Aorta (tissue), 5 donors: ENCODE measurements at regions of chr16 and their contacts with region 1.

Region 1: DNA sequence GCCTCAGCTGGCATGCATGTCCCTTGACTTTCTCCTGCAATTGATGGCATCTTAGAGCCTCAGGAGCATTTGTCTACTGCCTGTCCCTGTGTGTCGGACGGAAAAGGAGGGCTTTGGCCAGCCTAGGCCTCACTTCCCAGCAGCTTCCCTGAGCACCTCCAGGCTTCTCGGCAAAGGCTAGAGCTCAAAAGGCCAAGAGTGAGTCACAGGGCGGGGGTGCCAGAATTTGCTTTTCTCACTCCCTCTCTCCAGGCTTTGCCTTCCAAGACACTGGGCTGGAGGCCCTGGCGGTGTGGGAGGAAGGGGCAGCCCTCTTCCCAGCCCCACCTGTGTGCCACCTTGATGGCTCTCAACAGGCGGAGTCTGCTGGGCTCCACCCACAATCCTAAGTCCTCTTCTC is 107.3 kb upstream of the MAF start:
- DNase-seq: peak; percentile 92 to 94
- ATAC-seq: peak; percentile 91
- H3K4me3 ChIP-seq: no peak overlapping the region
- H3K27ac ChIP-seq: peak overlapping the region; percentile 88
- H3K4me1 ChIP-seq: peaks cover 4 to 13% of the 10 kb centered on the region in 2 donors
- H3K27me3 ChIP-seq: no peaks in the 10 kb centered on the region

Region 2: DNA sequence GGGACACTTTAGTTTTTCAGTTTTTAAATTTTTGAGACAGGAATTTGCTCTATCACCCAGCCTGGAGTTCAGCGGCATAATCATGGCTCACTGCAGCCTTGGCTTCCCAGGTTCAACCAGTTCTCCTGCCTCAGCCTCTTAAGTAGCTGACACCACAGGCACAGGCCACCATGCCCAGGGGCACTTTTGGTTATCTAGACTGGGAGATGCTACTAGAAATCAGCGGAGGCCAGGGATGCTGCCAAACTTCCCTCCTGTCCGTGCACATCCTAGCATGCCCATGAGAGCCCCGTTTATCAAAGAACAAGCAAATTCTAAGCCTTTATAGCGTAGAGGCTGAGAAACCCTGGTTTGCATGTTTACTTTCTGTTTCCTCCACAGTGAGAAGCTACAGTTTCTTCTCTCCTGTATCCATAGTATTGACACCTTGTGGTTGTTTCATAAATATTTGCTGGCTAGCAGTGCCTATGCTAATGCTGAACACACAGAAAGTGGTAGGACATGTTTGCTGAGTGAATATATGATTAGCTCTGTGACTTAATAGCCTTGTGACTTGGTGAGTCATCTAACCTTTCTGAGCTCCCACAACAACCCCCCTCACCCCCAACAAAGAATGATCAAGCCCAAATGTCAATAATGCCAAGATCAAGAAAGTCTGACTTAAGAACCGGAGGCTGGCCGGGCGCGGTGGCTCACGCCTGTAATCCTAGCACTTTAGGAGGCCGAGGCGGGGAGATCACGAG is 68.1 kb before region 1 on chr16:
- intact Hi-C with region 1: no loop called
- DNase-seq: no peak
- ATAC-seq: no peak
- H3K4me3 ChIP-seq: no peak overlapping the region
- H3K27ac ChIP-seq: no peak overlapping the region
- H3K4me1 ChIP-seq: no peaks in the 10 kb centered on the region
- H3K27me3 ChIP-seq: no peaks in the 10 kb centered on the region

Region 3: DNA sequence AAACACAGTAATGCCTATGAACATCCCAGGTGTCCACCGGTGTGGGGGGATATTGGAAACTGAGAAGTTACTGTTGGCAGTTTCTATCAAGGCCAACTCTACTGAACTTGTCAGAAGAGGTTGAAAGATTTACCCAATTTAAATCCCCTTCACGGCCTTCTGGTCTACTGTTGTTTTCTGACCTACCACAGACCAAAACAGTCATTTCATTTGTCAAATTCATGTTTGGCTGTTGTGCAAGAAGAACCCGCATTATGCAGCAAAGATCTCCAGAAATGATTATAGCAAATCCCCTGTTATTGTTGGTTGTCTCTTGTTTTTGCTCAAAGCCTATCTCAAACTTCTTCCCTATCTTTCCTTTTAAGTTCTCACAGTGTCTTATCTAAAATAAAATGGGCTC is 34.2 kb before region 1 on chr16:
- intact Hi-C with region 1: loop called in 1 of 2 experiments (anchors 5 kb)
- DNase-seq: no peak
- ATAC-seq: no peak
- H3K4me3 ChIP-seq: no peak overlapping the region
- H3K27ac ChIP-seq: peak overlapping the region; percentile 63 to 87
- H3K4me1 ChIP-seq: peaks cover 1 to 11% of the 10 kb centered on the region in 2 donors
- H3K27me3 ChIP-seq: no peaks in the 10 kb centered on the region